Endothelial cell of umbilical vein (primary cell): ENCODE measurements at regions of chr1 and their contacts with region 1.

Region 1: GRCh38 chr1:211469938-211470529 is 21.9 kb downstream of the RD3 start:
- DNase-seq: peak; percentile 80
- H3K4me3 ChIP-seq: no peak overlapping the region
- H3K27ac ChIP-seq: no peak overlapping the region
- H3K4me1 ChIP-seq: peaks cover 20% of the 10 kb centered on the region
- H3K27me3 ChIP-seq: peaks cover 0 to 7% of the 10 kb centered on the region in 2 experiments
- CTCF ChIP-seq: peak; percentile 92 to 96
- POLR2A ChIP-seq: no peak

Region 2: GRCh38 chr1:211382714-211383480 is 87.1 kb before region 1 on chr1:
- CTCF ChIA-PET with region 1: interaction called, 5 read pairs
- POLR2A ChIA-PET with region 1: no interaction called
- dilution Hi-C with region 1: no loop called
- intact Hi-C with region 1: loop called (anchors 2 kb)
- DNase-seq: peak; percentile 94
- H3K4me3 ChIP-seq: peak overlapping the region; percentile 50 to 77 (median 56)
- H3K27ac ChIP-seq: peak overlapping the region; percentile 96
- H3K4me1 ChIP-seq: peaks cover 11% of the 10 kb centered on the region
- H3K27me3 ChIP-seq: no peaks in the 10 kb centered on the region
- CTCF ChIP-seq: no peak
- POLR2A ChIP-seq: peak; percentile 98

Region 3: DNA sequence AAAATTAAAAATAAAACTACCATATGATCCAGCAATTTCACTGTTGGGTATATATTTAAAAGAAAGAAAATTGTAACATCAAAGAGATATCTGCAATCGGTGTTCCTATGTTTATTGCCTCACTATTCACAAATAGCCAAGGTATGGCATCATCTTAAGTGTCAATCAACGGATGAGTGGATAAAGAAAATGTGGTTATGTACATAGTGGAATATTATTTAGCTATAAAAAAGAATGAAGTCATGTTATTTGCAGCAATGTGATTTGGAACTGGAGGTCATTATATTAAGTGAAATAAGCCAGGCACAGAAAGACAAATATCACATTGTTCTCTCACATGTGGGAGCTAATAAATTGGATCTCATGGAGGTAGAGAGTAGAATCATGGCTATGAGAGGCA is 54.3 kb before region 1 on chr1:
- CTCF ChIA-PET with region 1: interaction called, 3 read pairs
- POLR2A ChIA-PET with region 1: no interaction called
- dilution Hi-C with region 1: no loop called
- intact Hi-C with region 1: loop called (anchors 2 kb)
- DNase-seq: no peak
- H3K4me3 ChIP-seq: no peak overlapping the region
- H3K27ac ChIP-seq: no peak overlapping the region
- H3K4me1 ChIP-seq: no peaks in the 10 kb centered on the region
- H3K27me3 ChIP-seq: no peaks in the 10 kb centered on the region
- CTCF ChIP-seq: no peak
- POLR2A ChIP-seq: no peak

Region 4: GRCh38 chr1:211484755-211485479 is 14.9 kb after region 1 on chr1:
- CTCF ChIA-PET with region 1: interaction called, 19 read pairs
- POLR2A ChIA-PET with region 1: no interaction called
- dilution Hi-C with region 1: no loop called
- intact Hi-C with region 1: no loop called
- DNase-seq: no peak
- H3K4me3 ChIP-seq: no peak overlapping the region
- H3K27ac ChIP-seq: no peak overlapping the region
- H3K4me1 ChIP-seq: no peaks in the 10 kb centered on the region
- H3K27me3 ChIP-seq: peaks cover 6 to 13% of the 10 kb centered on the region in 2 experiments
- CTCF ChIP-seq: no peak
- POLR2A ChIP-seq: no peak